CD8-positive, alpha-beta T cell (primary cell): ENCODE measurements at regions of chr15 and their contacts with region 1.

Region 1: GRCh38 chr15:90598031-90598577 is 68.4 kb downstream of the CRTC3 start:
- DNase-seq: peak in 2 of 9 experiments; percentile 14 to 47
- ATAC-seq: no peak
- H3K4me3 ChIP-seq: peak overlapping the region in 1 of 2 experiments; percentile 1
- H3K4me3 Mint-ChIP-seq: peak overlapping the region; percentile 40
- H3K27ac ChIP-seq: peak overlapping the region; percentile 42 to 81
- H3K27ac Mint-ChIP-seq: peak overlapping the region; percentile 99
- H3K4me1 ChIP-seq: peaks cover 74% of the 10 kb centered on the region
- H3K4me1 Mint-ChIP-seq: peaks cover 83% of the 10 kb centered on the region
- H3K27me3 ChIP-seq: no peaks in the 10 kb centered on the region
- H3K27me3 Mint-ChIP-seq: no peaks in the 10 kb centered on the region
- CTCF ChIP-seq: no peak

Region 2: DNA sequence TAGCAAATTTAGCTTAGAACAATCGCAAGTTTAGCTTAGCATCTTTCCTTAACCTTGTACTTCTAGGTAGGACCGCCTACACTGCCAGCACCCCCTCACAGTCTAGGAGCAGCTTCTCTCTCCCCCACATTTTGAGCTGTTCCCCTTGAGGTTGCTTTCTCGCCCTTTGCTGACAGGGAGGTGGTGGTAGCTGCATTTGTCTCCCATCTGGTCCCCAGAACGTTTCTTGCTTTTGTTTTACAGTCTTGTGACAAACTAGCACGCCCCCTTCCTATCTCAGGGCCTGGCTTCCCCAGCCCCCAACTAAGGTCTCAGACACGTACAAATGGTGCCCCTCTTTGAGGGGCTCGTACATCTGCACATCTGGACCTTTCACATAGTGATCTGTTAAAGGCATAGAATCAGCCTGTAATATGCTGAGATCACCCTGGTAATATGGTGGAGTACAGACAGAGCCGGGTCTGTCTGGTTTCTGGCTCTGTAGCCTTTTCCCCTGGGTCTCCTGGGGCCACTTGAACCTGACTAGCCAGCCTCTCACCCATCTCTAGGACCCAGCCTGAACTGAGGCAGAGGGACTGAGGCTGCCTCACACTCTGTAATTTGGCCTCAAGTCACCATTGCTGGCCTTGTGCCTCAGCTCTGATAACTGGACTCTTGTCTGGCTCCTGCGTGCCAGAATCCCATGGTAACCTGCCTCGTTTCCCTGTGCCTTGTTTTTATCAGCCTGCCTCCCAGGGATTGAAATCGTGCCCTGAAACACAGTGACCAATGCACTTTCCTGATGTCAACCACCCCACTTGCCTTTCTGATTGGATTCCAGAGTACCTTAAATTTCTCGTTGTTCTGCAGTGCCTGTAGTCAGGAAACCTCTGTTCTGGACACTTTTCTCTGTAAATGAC is 40.7 kb before region 1 on chr15:
- CTCF ChIA-PET with region 1: interaction called, 3 read pairs
- POLR2A ChIA-PET with region 1: interaction called, 3 read pairs
- intact Hi-C with region 1: loop called in 1 of 2 experiments (anchors 2 kb)
- DNase-seq: peak in 4 of 9 experiments; percentile 24 to 58 (median 39)
- ATAC-seq: peak; percentile 53
- H3K4me3 ChIP-seq: no peak overlapping the region
- H3K4me3 Mint-ChIP-seq: peak overlapping the region; percentile 26
- H3K27ac ChIP-seq: no peak overlapping the region
- H3K27ac Mint-ChIP-seq: peak overlapping the region; percentile 84
- H3K4me1 ChIP-seq: peaks cover 53% of the 10 kb centered on the region
- H3K4me1 Mint-ChIP-seq: peaks cover 79% of the 10 kb centered on the region
- H3K27me3 ChIP-seq: no peaks in the 10 kb centered on the region
- H3K27me3 Mint-ChIP-seq: no peaks in the 10 kb centered on the region
- CTCF ChIP-seq: no peak

Region 3: GRCh38 chr15:90564051-90564450 is 34.1 kb before region 1 on chr15:
- CTCF ChIA-PET with region 1: interaction called, 3 read pairs
- POLR2A ChIA-PET with region 1: interaction called, 4 read pairs
- intact Hi-C with region 1: loop called (anchors 2 kb)
- DNase-seq: peak in 2 of 9 experiments; percentile 26 to 66
- ATAC-seq: peak; percentile 47
- H3K4me3 ChIP-seq: no peak overlapping the region
- H3K4me3 Mint-ChIP-seq: peak overlapping the region; percentile 54
- H3K27ac ChIP-seq: peak overlapping the region; percentile 34 to 75
- H3K27ac Mint-ChIP-seq: peak overlapping the region; percentile 94
- H3K4me1 ChIP-seq: peaks cover 95% of the 10 kb centered on the region
- H3K4me1 Mint-ChIP-seq: peaks cover 87% of the 10 kb centered on the region
- H3K27me3 ChIP-seq: no peaks in the 10 kb centered on the region
- H3K27me3 Mint-ChIP-seq: no peaks in the 10 kb centered on the region
- CTCF ChIP-seq: no peak

Region 4: DNA sequence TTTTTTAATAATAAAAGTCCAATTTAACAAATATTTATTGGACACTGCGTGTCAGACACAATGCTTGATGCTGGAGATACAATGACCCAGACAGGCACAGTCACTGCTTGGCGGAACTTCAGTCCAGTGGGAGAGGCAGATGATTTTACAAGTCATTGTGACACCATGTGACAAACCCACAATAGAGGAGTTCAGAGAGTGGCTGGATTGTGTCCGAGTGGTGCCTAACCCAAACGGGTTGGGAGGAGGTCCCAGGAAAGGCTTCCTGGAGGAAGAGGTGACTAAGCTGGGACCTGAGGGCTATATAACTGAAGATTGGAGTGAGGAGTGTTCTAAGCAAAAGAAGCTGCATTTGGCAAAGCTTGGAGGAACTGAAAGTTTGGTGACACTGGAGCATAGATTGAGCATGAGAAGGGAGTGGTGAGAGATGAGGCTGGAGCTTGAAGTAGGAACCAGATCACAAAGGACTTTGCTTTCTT is 27.0 kb before region 1 on chr15:
- CTCF ChIA-PET with region 1: interaction called, 5 read pairs
- POLR2A ChIA-PET with region 1: interaction called, 4 read pairs
- intact Hi-C with region 1: loop called in 1 of 2 experiments (anchors 1 kb)
- DNase-seq: peak in 1 of 9 experiments; percentile 38
- ATAC-seq: no peak
- H3K4me3 ChIP-seq: peak overlapping the region in 1 of 2 experiments; percentile 12
- H3K4me3 Mint-ChIP-seq: peak overlapping the region; percentile 16
- H3K27ac ChIP-seq: peak overlapping the region in 1 of 2 experiments; percentile 55
- H3K27ac Mint-ChIP-seq: peak overlapping the region; percentile 2
- H3K4me1 ChIP-seq: peaks cover 94% of the 10 kb centered on the region
- H3K4me1 Mint-ChIP-seq: peaks cover 81% of the 10 kb centered on the region
- H3K27me3 ChIP-seq: no peaks in the 10 kb centered on the region
- H3K27me3 Mint-ChIP-seq: no peaks in the 10 kb centered on the region
- CTCF ChIP-seq: no peak

Region 5: GRCh38 chr15:91548549-91548948 is 950.4 kb after region 1 on chr15:
- CTCF ChIA-PET with region 1: no interaction called
- POLR2A ChIA-PET with region 1: no interaction called
- intact Hi-C with region 1: no loop called
- DNase-seq: no peak
- ATAC-seq: no peak
- H3K4me3 ChIP-seq: no peak overlapping the region
- H3K4me3 Mint-ChIP-seq: no peak overlapping the region
- H3K27ac ChIP-seq: no peak overlapping the region
- H3K27ac Mint-ChIP-seq: no peak overlapping the region
- H3K4me1 ChIP-seq: no peaks in the 10 kb centered on the region
- H3K4me1 Mint-ChIP-seq: no peaks in the 10 kb centered on the region
- H3K27me3 ChIP-seq: no peaks in the 10 kb centered on the region
- H3K27me3 Mint-ChIP-seq: no peaks in the 10 kb centered on the region
- CTCF ChIP-seq: no peak